Dorsolateral prefrontal cortex (tissue), 120 donors: ENCODE measurements at regions of chr5 and their contacts with region 1.

Region 1: DNA sequence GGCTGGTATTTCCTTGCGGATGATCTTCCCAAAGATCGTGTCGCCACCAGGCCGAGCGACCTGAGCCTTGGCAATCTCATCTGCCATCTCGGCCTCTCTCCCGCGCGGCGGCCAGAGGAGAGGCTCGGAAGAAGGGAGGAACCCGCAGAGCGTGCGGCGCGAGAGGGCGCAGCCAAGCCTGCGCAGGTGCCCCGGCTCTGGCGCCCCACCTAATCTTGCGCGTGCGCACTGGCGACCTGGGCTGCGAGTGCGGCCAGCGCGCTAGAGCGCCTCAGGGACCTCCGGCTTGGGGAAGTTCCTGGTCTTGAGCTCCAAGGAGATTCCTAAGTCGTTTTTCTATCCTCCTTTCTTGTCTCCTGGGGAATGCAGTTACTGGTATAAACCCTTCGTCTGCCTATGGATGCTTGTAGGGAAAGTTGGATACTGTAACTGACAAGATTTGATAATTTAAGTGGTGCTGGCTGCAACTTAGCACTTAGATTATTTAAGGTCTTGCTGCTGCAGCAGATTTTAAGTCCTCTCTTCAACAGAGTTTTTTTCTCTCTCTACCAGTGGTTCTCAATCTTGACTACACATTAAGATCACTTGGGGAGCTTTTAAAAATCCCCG is at the start of gene HINT1:
- DNase-seq: peak; percentile 71 to 92 (median 86)
- H3K4me3 ChIP-seq: peak within 1 kb of the TSS; percentile 60 to 97 (median 89)
- H3K27ac ChIP-seq: peak within 1 kb of the TSS; percentile 65 to 99 (median 97)
- H3K27me3 ChIP-seq: no peaks in the 10 kb centered on the region
- CTCF ChIP-seq: peak in 49 of 56 donors; percentile 17 to 75 (median 51)
- total RNA-seq, gene HINT1: 99.1 to 267 (median 191) TPM

Region 2: GRCh38 chr5:129904102-129904666 is 1261.0 kb before region 1 on chr5 and contains the start of gene CHSY3:
- intact Hi-C with region 1: loop called in 1 of 2 experiments (anchors 10 kb)
- DNase-seq: peak; percentile 39 to 92 (median 84)
- H3K4me3 ChIP-seq: peak within 1 kb of the TSS; percentile 59 to 90 (median 78)
- H3K27ac ChIP-seq: peak within 1 kb of the TSS in 57 of 59 donors; percentile 29 to 92 (median 79)
- H3K27me3 ChIP-seq: no peaks in the 10 kb centered on the region
- CTCF ChIP-seq: peak in 31 of 56 donors; percentile 10 to 60 (median 28)
- total RNA-seq, gene CHSY3: 3.7 to 18.6 (median 11.0) TPM

Region 3: GRCh38 chr5:131263648-131264450 is 98.6 kb after region 1 on chr5 and contains the start of gene CDC42SE2:
- intact Hi-C with region 1: loop called (anchors 2 kb)
- DNase-seq: peak; percentile 68 to 92 (median 76)
- H3K4me3 ChIP-seq: peak within 1 kb of the TSS; percentile 73 to 99 (median 93)
- H3K27ac ChIP-seq: peak within 1 kb of the TSS; percentile 78 to 98 (median 94)
- H3K27me3 ChIP-seq: no peaks in the 10 kb centered on the region
- CTCF ChIP-seq: peak in 20 of 56 donors; percentile 5 to 57 (median 16)
- total RNA-seq, gene CDC42SE2: 34.8 to 102 (median 68.6) TPM

Region 4: GRCh38 chr5:131277875-131278740 is 112.9 kb after region 1 on chr5:
- intact Hi-C with region 1: loop called in 1 of 2 experiments (anchors 5 kb)
- DNase-seq: no peak
- H3K4me3 ChIP-seq: no peak overlapping the region
- H3K27ac ChIP-seq: peak overlapping the region in 54 of 59 donors; percentile 10 to 90 (median 66)
- H3K27me3 ChIP-seq: no peaks in the 10 kb centered on the region
- CTCF ChIP-seq: no peak

Region 5: DNA sequence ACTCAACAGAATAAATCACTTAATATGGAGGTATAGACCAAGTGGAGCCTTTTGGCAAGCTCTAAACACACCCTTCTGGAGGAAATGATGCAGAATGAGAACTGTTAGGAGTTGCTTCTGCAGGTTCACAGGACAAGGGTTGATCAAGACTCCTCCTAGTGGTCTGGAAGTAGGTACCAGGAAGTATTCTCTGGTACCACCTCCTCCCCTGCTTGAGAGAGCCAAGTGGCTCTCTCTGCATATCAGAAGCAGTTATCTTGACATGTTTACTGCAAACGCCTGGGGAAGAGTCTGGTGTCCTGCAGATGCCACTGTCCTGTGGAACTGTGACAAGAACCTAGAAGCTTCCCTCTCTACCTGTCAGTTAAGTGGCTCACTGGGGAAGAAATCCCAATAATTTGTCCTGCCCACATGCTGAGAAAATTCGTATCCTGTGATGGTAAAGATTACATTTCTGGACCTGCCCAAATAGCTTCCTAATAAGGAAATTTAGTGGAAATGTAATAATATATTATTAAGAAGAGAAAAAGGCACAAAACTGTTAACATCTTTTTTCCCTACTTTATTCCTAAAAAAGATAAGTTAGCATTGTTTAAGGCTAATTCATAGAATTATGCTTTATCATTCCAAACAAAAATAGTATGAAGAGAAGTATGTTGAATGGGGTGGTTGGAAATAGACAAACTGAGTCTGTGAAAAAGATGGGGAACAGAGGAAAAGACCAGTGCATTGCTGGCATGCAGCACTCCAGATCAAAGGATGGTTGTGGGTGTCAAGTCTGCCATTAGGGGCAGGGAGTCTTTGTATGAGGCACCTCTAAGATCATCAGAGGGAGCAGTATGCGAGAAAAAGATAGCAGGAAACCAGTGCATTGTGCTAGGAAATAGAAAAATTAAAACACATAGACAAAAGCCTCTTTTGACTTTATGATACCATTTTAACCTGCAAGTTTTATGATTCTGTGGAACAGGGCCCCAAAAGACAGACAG is 217.5 kb after region 1 on chr5:
- intact Hi-C with region 1: loop called (anchors 10 kb)
- DNase-seq: no peak
- H3K4me3 ChIP-seq: peak overlapping the region in 1 of 59 donors; percentile 7
- H3K27ac ChIP-seq: peak overlapping the region in 58 of 59 donors; percentile 9 to 95 (median 75)
- H3K27me3 ChIP-seq: no peaks in the 10 kb centered on the region
- CTCF ChIP-seq: peak in 52 of 56 donors; percentile 15 to 64 (median 46)

Region 6: GRCh38 chr5:131417240-131417869 is 252.1 kb after region 1 on chr5:
- intact Hi-C with region 1: loop called (anchors 2 to 10 kb)
- DNase-seq: peak; percentile 59 to 86 (median 76)
- H3K4me3 ChIP-seq: peak overlapping the region in 4 of 59 donors; percentile 7 to 27 (median 26)
- H3K27ac ChIP-seq: peak overlapping the region in 41 of 59 donors; percentile 1 to 82 (median 48)
- H3K27me3 ChIP-seq: no peaks in the 10 kb centered on the region
- CTCF ChIP-seq: peak; percentile 78 to 99 (median 92)